AG04450 (cell line): ENCODE measurements at regions of chr6 and their contacts with region 1.

Region 1: GRCh38 chr6:108651340-108652227 is 90.9 kb downstream of the FOXO3 start:
- DNase-seq: peak; percentile 67
- H3K4me3 ChIP-seq: peak overlapping the region; percentile 14; the same call in 1 of the 2 replicates
- H3K27ac ChIP-seq: peak overlapping the region; percentile 90
- H3K27me3 ChIP-seq: no peaks in the 10 kb centered on the region
- CTCF ChIP-seq: no peak

Region 2: GRCh38 chr6:108592371-108593337 is 58.9 kb before region 1 on chr6:
- CTCF ChIA-PET with region 1: no interaction called
- POLR2A ChIA-PET with region 1: interaction called, 12 read pairs
- DNase-seq: no peak
- H3K4me3 ChIP-seq: no peak overlapping the region
- H3K27ac ChIP-seq: peak overlapping the region; percentile 21
- H3K27me3 ChIP-seq: no peaks in the 10 kb centered on the region
- CTCF ChIP-seq: no peak

Region 3: DNA sequence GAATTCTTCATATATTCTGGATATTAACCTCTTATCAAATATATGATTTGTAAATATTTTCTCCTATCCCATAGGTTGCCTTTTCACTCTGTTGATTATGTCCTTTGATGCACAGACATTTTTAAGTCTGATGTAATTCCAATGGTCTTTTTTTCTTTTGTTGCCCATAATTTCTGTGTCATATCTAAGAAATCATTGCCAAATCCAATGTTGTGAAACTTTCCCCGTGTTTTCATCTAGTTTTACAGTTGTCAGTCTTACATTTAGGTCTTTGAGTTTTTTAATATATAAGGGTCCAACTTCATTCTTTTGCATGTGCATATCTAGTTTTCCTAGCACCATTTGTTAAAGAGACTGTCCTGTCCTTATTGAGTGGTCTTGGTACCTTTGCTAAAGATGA is 331.6 kb after region 1 on chr6:
- CTCF ChIA-PET with region 1: no interaction called
- POLR2A ChIA-PET with region 1: no interaction called
- DNase-seq: no peak
- H3K4me3 ChIP-seq: no peak overlapping the region
- H3K27ac ChIP-seq: no peak overlapping the region
- H3K27me3 ChIP-seq: no peaks in the 10 kb centered on the region
- CTCF ChIP-seq: no peak